Heart right ventricle (tissue), 16 donors: ENCODE measurements at regions of chr12 and their contacts with region 1.

Region 1: GRCh38 chr12:2451025-2451424 is 343.7 kb upstream of the FKBP4 start:
- DNase-seq: no peak
- ATAC-seq: no peak
- H3K4me3 ChIP-seq: no peak overlapping the region
- H3K27ac ChIP-seq: peak overlapping the region in 3 of 10 donors; percentile 28 to 60 (median 33)
- H3K4me1 ChIP-seq: peaks cover 3 to 49% (median 19%) of the 10 kb centered on the region in 9 donors
- H3K27me3 ChIP-seq: no peaks in the 10 kb centered on the region
- CTCF ChIP-seq: no peak

Region 2: DNA sequence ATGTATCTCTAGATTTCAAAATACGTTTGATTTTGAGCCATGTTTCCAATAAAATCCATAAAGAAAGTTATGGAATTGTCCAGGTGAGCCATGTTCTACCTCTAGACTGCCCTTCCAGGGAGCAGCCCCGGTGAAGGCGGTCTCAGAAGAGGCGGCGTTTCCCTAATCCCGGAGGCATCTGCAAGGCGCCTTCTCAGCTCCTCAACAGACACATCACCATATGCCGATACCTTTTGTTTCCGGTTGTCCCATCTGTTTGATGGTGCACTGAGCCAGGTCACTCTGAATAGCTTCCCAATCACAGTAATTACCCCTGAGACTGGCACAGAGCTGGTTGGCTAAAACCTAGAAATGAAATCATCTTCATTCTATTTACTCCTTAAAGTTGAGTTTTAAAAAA is 38.2 kb after region 1 on chr12:
- intact Hi-C with region 1: loop called in 3 of 10 experiments (anchors 5 kb)
- DNase-seq: no peak
- ATAC-seq: no peak
- H3K4me3 ChIP-seq: no peak overlapping the region
- H3K27ac ChIP-seq: no peak overlapping the region
- H3K4me1 ChIP-seq: peaks cover 0 to 67% (median 34%) of the 10 kb centered on the region in 9 donors
- H3K27me3 ChIP-seq: no peaks in the 10 kb centered on the region
- CTCF ChIP-seq: no peak